ENCODE measurements at regions of chr12 and their contacts with region 1.

Region 1: GRCh38 chr12:113184900-113185773 is at the starts of genes DDX54 and RITA1:
- DNase-seq: peak; percentile 97
- H3K4me3 Mint-ChIP-seq: peak within 1 kb of the TSS; percentile 99
- H3K27ac Mint-ChIP-seq: peak within 1 kb of the TSS; percentile 98
- H3K4me1 Mint-ChIP-seq: peaks cover 20% of the 10 kb centered on the region
- H3K27me3 Mint-ChIP-seq: no peaks in the 10 kb centered on the region
- total RNA-seq, gene DDX54: 122 and 127 TPM in 2 replicates
- total RNA-seq, gene RITA1: 25.5 and 25.8 TPM in 2 replicates

Region 2: DNA sequence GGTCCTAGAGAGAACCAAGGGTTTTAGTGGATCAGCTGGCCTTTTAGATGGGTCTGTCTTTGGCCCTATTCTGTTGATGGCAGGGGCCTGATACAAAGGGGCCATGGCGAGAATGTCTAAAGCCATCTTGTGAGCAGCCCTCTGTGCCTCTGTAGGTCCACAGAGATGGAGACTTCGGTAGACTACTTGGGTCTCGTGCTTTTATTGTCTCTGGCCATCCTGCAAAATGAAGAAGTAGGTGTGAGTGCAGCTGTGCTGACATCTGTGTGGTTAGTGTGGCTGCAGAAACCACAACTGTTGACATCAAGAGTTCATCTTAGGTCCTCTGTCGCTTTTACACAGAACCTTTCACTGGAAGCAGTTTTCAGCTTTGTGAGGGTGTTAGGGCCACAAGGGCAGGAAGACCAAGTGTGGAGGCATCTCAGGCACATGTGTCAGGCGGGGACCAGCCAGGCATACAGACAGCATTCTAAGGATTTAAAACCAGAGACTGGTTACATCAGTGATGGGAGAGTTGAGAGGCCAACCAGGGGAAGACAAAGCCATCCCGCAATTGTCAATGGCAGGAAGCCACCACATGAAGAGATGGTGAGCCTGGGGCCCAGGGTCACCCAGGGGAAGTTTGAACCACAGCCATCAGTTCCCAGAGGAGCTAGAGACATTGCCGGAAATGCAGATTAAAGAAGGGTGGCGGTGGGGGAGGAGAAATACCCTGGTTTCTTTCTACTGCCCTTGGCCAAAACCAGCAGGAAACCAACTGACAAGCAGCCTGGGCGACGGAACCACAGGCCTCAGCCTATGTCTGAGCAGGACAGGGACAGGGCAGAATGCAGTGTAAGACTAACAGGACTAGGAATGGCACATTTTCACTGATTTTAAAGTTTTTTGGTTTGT is 23.2 kb after region 1 on chr12:
- intact Hi-C with region 1: loop called (anchors 1 kb)
- DNase-seq: peak; percentile 92
- H3K4me3 Mint-ChIP-seq: peak overlapping the region; percentile 77
- H3K27ac Mint-ChIP-seq: peak overlapping the region; percentile 97
- H3K4me1 Mint-ChIP-seq: peaks cover 54% of the 10 kb centered on the region
- H3K27me3 Mint-ChIP-seq: no peaks in the 10 kb centered on the region

Region 3: GRCh38 chr12:113358381-113359132 is 173.4 kb after region 1 on chr12 and contains the start of gene PLBD2:
- intact Hi-C with region 1: loop called (anchors 1 kb)
- DNase-seq: peak; percentile 97
- H3K4me3 Mint-ChIP-seq: peak within 1 kb of the TSS; percentile 89
- H3K27ac Mint-ChIP-seq: peak within 1 kb of the TSS; percentile 76
- H3K4me1 Mint-ChIP-seq: peaks cover 16% of the 10 kb centered on the region
- H3K27me3 Mint-ChIP-seq: peaks cover 3% of the 10 kb centered on the region
- total RNA-seq, gene PLBD2: 16.0 and 16.3 TPM in 2 replicates